ENCODE measurements at regions of chr2 and their contacts with region 1.

Region 1: DNA sequence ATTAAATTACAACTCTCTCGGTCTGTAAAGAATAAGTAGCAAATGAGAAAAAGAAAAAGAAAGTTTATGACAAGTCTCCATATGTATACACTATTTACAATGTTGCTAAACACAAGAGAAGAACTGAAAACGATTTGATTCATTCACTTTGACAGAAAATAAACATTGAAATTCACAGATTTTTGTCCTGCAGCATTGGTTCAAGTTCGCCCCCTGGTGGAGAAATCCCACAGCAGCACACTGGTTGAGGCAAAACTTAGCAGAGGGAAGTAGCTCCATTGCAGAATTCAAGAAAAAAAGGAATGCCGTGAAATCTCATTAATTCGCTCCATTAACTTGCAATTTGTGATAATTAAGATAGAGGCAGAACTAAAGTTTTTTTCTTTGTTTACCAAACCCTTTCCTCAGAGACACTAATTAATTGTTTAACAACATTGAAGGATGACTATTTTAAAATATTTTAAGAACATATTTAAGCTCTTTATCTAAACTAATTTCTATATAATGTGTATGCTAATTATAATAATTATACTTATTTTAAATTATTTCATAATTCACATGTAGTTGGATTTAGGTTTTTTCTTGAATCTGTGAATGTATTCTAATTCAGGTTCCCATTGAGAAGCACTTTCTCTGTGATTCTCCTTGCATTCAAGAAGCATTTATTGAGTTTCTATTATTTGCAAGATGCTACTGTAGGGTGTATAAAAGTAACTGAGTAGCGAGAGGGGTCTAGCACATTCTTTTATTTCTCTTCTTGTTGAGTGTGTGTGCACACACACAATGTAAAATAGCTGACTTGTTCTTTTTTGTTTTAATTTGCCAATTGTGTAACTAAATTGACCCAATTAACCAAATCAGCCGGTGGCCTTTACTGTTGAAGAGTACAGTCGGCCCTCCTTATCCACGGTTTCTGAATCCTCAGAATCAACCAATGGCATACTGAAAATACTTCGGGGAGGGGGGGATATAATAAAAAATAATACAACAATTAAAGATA is 74.1 kb downstream of the COL4A3 start:
- DNase-seq: peak; percentile 70
- ATAC-seq: peak; percentile 55
- H3K4me3 Mint-ChIP-seq: no peak overlapping the region
- H3K27ac Mint-ChIP-seq: no peak overlapping the region
- H3K4me1 Mint-ChIP-seq: no peaks in the 10 kb centered on the region
- H3K27me3 Mint-ChIP-seq: peaks cover 11% of the 10 kb centered on the region

Region 2: GRCh38 chr2:226934546-226935201 is 303.9 kb before region 1 on chr2:
- CTCF ChIA-PET with region 1: no interaction called
- POLR2A ChIA-PET with region 1: no interaction called
- DNase-seq: no peak
- ATAC-seq: no peak
- H3K4me3 Mint-ChIP-seq: no peak overlapping the region
- H3K27ac Mint-ChIP-seq: no peak overlapping the region
- H3K4me1 Mint-ChIP-seq: no peaks in the 10 kb centered on the region
- H3K27me3 Mint-ChIP-seq: no peaks in the 10 kb centered on the region

Region 3: GRCh38 chr2:227127201-227127600 is 111.3 kb before region 1 on chr2:
- CTCF ChIA-PET with region 1: interaction called, 16 read pairs
- POLR2A ChIA-PET with region 1: no interaction called
- DNase-seq: no peak
- ATAC-seq: no peak
- H3K4me3 Mint-ChIP-seq: no peak overlapping the region
- H3K27ac Mint-ChIP-seq: no peak overlapping the region
- H3K4me1 Mint-ChIP-seq: no peaks in the 10 kb centered on the region
- H3K27me3 Mint-ChIP-seq: peaks cover 18% of the 10 kb centered on the region

Region 4: GRCh38 chr2:227132986-227133385 is 105.6 kb before region 1 on chr2:
- CTCF ChIA-PET with region 1: interaction called, 16 read pairs
- POLR2A ChIA-PET with region 1: no interaction called
- DNase-seq: no peak
- ATAC-seq: no peak
- H3K4me3 Mint-ChIP-seq: no peak overlapping the region
- H3K27ac Mint-ChIP-seq: no peak overlapping the region
- H3K4me1 Mint-ChIP-seq: no peaks in the 10 kb centered on the region
- H3K27me3 Mint-ChIP-seq: peaks cover 10% of the 10 kb centered on the region

Region 5: DNA sequence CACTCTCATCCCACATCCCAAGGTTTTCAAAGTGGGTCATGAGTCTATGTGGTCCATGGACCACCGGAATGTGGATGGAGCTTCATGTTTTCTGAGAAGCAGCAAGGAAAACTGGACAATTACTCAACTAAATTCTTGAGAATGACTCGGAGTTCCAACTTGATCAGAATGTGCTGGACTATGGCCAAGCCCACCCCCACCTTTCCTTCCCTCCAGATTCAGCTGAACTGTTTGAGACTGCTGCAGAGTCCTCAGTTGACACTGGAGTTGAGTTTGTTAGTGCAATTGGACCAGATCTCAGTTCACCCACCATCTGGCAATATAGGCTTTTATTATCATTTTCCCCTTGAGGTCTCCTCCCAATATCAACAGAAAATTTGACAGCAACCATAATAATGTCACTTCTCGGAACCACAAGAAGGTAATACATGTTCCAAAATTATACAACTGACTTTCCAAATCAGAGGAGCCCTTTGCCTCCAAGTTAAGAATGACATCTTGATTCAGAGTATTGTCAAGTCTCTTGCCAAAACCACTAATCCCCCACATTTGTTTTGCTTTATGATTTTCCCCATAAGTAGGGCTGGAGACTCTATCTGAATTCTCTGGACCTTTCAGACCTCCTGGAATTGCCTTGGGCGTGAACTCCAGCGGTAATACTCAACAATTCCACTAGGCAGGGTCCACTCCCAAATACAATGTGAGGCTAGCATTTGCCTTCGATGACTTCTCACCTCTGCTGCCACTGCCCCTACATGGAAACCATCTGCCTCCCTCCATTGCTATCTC is 83.4 kb before region 1 on chr2:
- CTCF ChIA-PET with region 1: no interaction called
- POLR2A ChIA-PET with region 1: no interaction called
- DNase-seq: no peak
- ATAC-seq: no peak
- H3K4me3 Mint-ChIP-seq: no peak overlapping the region
- H3K27ac Mint-ChIP-seq: no peak overlapping the region
- H3K4me1 Mint-ChIP-seq: no peaks in the 10 kb centered on the region
- H3K27me3 Mint-ChIP-seq: peaks cover 23% of the 10 kb centered on the region

Region 6: DNA sequence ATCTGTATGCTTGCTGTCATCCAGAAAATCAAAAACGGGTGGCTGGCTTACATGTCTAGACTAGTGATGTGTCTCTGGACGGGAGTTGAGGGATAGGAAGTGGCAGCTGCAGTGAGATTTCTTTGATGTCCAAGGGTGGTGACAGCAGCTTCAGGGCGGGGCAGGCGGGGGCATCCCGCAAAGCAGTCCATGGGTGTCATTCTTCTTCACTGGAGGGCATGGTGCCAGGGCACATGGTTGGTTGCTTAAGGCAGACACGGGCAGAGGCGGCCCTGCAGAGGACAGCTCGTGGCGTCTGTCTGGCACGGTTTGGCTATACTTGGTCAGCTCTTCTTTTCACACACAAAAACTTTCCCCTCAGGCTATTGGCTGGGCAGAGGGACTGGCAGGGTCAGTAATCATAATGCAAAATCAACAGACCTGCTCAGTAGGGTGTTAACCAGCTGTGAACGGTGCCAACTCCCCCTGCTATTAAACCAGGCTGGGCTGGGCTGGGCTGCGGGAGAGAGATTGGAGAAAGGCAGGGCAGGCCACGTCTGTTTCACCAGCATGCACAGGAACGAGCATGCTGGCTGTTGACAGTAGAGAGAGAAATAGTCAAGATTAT is 10.4 kb before region 1 on chr2:
- CTCF ChIA-PET with region 1: interaction called, 12 read pairs
- POLR2A ChIA-PET with region 1: no interaction called
- DNase-seq: no peak
- ATAC-seq: no peak
- H3K4me3 Mint-ChIP-seq: no peak overlapping the region
- H3K27ac Mint-ChIP-seq: no peak overlapping the region
- H3K4me1 Mint-ChIP-seq: no peaks in the 10 kb centered on the region
- H3K27me3 Mint-ChIP-seq: peaks cover 6% of the 10 kb centered on the region

Region 7: DNA sequence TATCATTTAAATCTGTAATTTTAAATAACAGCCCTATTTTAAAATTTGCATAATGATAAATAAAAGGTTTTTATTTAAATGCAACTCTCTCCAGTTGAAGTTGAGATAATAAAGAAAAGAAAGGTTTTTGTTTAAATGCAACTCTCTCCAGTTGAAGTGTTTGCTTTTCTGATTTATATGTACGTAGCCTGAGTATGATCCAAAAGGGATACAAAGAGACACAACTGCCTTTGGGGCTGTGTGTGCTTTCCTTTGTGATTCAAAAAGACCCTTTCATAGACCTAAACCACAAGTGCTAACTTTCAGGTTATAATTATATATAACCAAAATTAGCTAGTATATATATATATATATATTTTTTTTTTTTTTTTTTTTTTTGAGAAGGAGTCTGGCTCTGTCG is 10.3 kb after region 1 on chr2:
- CTCF ChIA-PET with region 1: interaction called, 16 read pairs
- POLR2A ChIA-PET with region 1: no interaction called
- DNase-seq: no peak
- ATAC-seq: no peak
- H3K4me3 Mint-ChIP-seq: no peak overlapping the region
- H3K27ac Mint-ChIP-seq: no peak overlapping the region
- H3K4me1 Mint-ChIP-seq: no peaks in the 10 kb centered on the region
- H3K27me3 Mint-ChIP-seq: peaks cover 7% of the 10 kb centered on the region

Region 8: GRCh38 chr2:227766373-227766883 is 527.9 kb after region 1 on chr2:
- CTCF ChIA-PET with region 1: interaction called, 15 read pairs
- POLR2A ChIA-PET with region 1: no interaction called
- DNase-seq: peak; percentile 64
- ATAC-seq: peak; percentile 85
- H3K4me3 Mint-ChIP-seq: no peak overlapping the region
- H3K27ac Mint-ChIP-seq: no peak overlapping the region
- H3K4me1 Mint-ChIP-seq: no peaks in the 10 kb centered on the region
- H3K27me3 Mint-ChIP-seq: no peaks in the 10 kb centered on the region

Measured in activated CD8-positive, alpha-beta T cell treated with anti-CD3 and anti-CD28 coated beads, Interleukin-2, amount 10 ng/mL, durations not matched to agents 7 days and 5 days (primary cell).